ENCODE measurements at regions of chr2 and their contacts with region 1.

Region 1: GRCh38 chr2:219521066-219521880 is 7.0 kb downstream of the ASIC4 start:
- DNase-seq: peak in 3 of 5 donors; percentile 60 to 80 (median 77)
- H3K4me3 ChIP-seq: no peak overlapping the region
- H3K27ac ChIP-seq: no peak overlapping the region
- H3K4me1 ChIP-seq: peaks cover 0 to 3% (median 0%) of the 10 kb centered on the region in 3 donors
- H3K27me3 ChIP-seq: no peaks in the 10 kb centered on the region
- CTCF ChIP-seq: peak; percentile 2

Region 2: DNA sequence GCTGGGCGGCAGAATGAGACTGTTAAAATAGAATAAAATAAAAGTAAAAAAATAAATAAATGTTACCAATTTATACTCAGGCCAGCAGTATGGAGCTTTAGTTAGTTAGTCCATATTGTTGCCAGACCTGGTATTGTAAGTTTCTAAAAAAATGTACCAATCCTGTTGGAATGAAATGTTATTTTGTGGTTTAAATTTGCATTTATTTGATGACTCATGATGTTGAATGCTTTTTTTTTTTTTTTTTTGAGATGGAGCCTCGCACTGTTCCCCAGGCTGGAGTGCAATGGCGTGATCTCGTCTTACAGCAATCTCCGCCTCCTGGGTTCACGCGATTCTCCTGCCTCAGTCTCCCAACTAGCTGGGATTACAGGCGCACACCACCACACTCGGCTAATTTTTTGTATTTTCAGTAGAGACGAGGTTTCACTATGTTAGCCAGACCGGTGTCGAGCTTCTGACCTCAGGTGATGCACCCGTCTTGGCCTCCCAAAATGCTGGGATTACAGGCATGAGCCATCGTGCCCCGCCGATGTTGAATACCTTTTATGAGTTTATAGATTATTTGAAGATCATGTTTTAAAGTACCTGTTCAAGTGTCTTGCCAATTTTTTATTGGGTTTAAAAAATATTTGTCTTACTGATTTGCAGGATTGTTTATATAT is 206.3 kb before region 1 on chr2:
- intact Hi-C with region 1: no loop called
- DNase-seq: no peak
- H3K4me3 ChIP-seq: no peak overlapping the region
- H3K27ac ChIP-seq: no peak overlapping the region
- H3K4me1 ChIP-seq: no peaks in the 10 kb centered on the region
- H3K27me3 ChIP-seq: peaks cover 5% of the 10 kb centered on the region
- CTCF ChIP-seq: no peak

Region 3: DNA sequence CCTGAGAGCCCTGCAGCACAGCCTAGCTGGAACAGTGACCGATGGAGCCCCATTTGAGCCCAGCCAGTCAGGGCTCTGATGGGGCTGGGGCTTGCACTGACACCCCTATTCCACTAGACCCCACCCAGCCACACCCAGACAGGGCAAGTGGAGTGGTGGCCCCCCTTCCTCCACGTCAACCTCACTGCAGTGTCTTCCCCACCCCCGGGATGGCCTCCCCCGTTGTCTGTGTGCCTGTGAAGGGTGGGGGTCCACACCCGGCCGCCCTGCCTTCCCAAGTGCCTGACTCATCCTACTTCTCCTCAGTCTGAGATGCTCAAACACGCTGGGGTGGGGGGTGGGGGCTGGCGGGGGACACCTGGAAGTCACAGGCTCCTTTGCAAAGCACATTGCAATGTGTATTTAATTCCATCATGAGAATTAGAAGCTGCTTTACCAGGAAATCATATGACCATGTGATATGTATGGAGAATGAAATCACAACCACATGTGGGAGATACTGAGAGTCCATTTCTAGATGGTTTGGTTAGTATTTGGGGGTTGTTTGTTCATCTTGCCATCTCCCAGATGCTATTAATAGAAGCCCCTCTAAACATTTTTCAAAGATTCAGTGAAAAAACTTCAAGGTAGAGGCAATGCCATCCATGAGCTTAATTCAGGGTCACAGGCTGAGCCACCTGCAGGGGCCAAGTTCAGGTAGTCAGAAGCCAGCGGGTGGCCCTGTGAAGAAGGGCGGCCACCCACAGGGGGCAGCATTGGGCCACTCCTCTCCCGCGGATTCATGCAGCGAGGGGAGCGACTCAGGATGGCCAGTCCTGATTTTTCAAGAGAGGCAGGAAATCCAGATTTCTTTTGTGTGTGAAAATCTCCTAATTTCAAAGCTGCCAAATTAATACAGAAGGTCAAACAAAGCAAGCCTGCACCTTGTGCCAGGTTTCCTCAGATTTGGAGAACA is 45.3 kb before region 1 on chr2:
- intact Hi-C with region 1: loop called (anchors 10 kb)
- DNase-seq: peak; percentile 87 to 90 (median 87)
- H3K4me3 ChIP-seq: no peak overlapping the region
- H3K27ac ChIP-seq: no peak overlapping the region
- H3K4me1 ChIP-seq: no peaks in the 10 kb centered on the region
- H3K27me3 ChIP-seq: no peaks in the 10 kb centered on the region
- CTCF ChIP-seq: peak; percentile 79

Region 4: DNA sequence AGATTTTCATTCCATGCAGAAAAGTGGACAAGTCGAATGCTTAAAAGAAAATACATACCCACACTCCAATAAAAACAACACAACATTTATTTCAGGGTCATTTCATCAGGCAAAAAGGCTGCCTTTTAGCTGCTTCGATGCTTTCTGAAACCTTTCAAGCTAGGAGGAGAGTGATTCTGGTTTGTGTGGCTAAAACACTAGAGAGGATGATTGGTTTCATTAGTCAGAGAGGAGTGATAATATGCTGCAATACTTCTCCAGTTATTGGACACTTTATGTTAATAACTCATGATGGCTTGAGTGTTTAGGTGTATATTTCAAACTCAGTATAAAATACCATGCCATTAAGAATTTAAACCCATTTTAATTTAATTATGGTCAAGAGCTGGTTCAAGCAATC is 720.1 kb after region 1 on chr2:
- intact Hi-C with region 1: no loop called
- DNase-seq: no peak
- H3K4me3 ChIP-seq: no peak overlapping the region
- H3K27ac ChIP-seq: no peak overlapping the region
- H3K4me1 ChIP-seq: no peaks in the 10 kb centered on the region
- H3K27me3 ChIP-seq: no peaks in the 10 kb centered on the region
- CTCF ChIP-seq: no peak